Ovary (tissue), 10 donors: ENCODE measurements at regions of chr18 and their contacts with region 1.

Region 1: GRCh38 chr18:62522504-62523254 is at the start of gene ZCCHC2:
- DNase-seq: peak; percentile 98 to 99 (median 99)
- H3K4me3 ChIP-seq: peak within 1 kb of the TSS; percentile 90
- H3K27ac ChIP-seq: peak within 1 kb of the TSS; percentile 87 to 99
- H3K4me1 ChIP-seq: peaks cover 7% of the 10 kb centered on the region
- H3K27me3 ChIP-seq: no peaks in the 10 kb centered on the region
- CTCF ChIP-seq: no peak
- EP300 ChIP-seq: no peak
- POLR2A ChIP-seq: peak; percentile 90
- total RNA-seq, gene ZCCHC2: 14.8 to 24.5 (median 22.3) TPM

Region 2: GRCh38 chr18:62186774-62187542 is 335.7 kb before region 1 on chr18 and contains the starts of genes PIGN and RELCH:
- intact Hi-C with region 1: loop called in 1 of 4 experiments (anchors 5 kb)
- DNase-seq: peak; percentile 92 to 96 (median 94)
- H3K4me3 ChIP-seq: peak within 1 kb of the TSS; percentile 70
- H3K27ac ChIP-seq: peak within 1 kb of the TSS in 1 of 2 donors; percentile 50
- H3K4me1 ChIP-seq: peaks cover 7% of the 10 kb centered on the region
- H3K27me3 ChIP-seq: no peaks in the 10 kb centered on the region
- CTCF ChIP-seq: no peak
- EP300 ChIP-seq: no peak
- POLR2A ChIP-seq: peak; percentile 19
- total RNA-seq, gene PIGN: 17.7 to 29.1 (median 26.1) TPM
- total RNA-seq, gene RELCH: 21.5 to 32.7 (median 27.8) TPM

Region 3: DNA sequence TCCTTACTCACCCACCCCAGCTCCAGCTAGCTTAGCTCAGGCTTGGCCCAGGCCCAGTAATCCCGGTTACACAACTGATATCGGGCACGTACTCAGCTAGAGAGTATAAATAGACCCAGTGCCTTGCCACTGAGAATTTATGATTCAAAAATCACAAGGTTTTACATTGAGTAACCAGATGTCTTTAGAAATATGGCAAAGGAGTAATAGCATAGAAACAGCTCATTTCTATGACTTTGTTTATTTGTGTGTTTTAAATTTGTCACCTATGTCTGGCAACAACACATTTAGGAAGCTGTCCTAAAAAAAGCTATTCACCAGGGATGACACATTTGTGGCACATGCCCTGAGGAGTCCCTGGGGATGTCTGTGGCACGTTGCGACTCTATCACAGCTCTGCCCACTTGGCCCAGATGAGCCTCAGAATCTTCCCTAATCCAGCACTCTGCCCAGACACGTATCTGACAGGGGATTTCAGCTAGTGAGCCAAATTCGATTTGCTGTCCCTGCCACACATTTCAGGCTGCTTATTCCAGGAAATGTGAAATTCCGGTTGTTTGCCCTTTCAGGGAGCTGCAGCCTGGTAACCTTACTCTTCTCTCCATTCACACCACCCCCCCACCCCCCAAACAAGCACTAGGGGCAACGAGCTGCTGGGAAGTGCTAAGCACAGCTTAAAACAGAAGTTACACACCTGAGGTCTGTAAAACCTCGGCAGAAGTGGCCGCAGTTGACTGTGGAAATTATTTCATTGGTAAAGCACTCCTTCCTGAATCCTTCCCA is 85.3 kb before region 1 on chr18:
- intact Hi-C with region 1: loop called in 1 of 4 experiments (anchors 5 kb)
- DNase-seq: peak; percentile 42 to 86 (median 69)
- H3K4me3 ChIP-seq: no peak overlapping the region
- H3K27ac ChIP-seq: peak overlapping the region in 1 of 2 donors; percentile 20
- H3K4me1 ChIP-seq: peaks cover 4% of the 10 kb centered on the region
- H3K27me3 ChIP-seq: no peaks in the 10 kb centered on the region
- CTCF ChIP-seq: no peak
- EP300 ChIP-seq: no peak
- POLR2A ChIP-seq: no peak

Region 4: DNA sequence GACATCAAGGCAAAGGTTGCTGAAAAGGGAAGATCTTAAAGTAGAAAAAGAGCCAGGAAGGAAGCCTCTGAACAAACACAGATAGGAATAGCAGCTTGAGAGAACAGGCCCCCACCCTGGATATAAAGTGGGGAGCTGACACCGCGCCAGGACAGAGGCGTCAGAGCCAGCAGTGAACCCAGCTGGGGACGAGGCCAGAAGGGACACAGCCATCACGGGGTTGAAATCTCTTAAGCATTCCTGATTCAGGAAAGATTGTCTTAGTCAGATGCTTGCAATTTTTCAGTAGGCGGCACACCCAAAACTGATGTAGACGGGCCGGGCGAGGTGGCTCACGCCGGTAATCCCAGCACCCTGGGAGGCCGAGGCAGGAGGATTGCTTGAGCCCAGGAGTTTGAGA is 98.9 kb after region 1 on chr18:
- intact Hi-C with region 1: no loop called
- DNase-seq: no peak
- H3K4me3 ChIP-seq: no peak overlapping the region
- H3K27ac ChIP-seq: no peak overlapping the region
- H3K4me1 ChIP-seq: no peaks in the 10 kb centered on the region
- H3K27me3 ChIP-seq: no peaks in the 10 kb centered on the region
- CTCF ChIP-seq: no peak
- EP300 ChIP-seq: no peak
- POLR2A ChIP-seq: no peak

Region 5: GRCh38 chr18:62714671-62715435 is 192.2 kb after region 1 on chr18:
- intact Hi-C with region 1: loop called in 1 of 4 experiments (anchors 5 kb)
- DNase-seq: peak; percentile 100
- H3K4me3 ChIP-seq: peak overlapping the region; percentile 59
- H3K27ac ChIP-seq: peak overlapping the region; percentile 91 to 99
- H3K4me1 ChIP-seq: peaks cover 1% of the 10 kb centered on the region
- H3K27me3 ChIP-seq: no peaks in the 10 kb centered on the region
- CTCF ChIP-seq: peak; percentile 72 to 86 (median 81)
- EP300 ChIP-seq: no peak
- POLR2A ChIP-seq: no peak

Region 6: GRCh38 chr18:63367053-63367953 is 844.6 kb after region 1 on chr18 and contains the start of gene KDSR:
- intact Hi-C with region 1: loop called in 1 of 4 experiments (anchors 10 kb)
- DNase-seq: peak; percentile 95 to 98 (median 96)
- H3K4me3 ChIP-seq: peak within 1 kb of the TSS; percentile 100
- H3K27ac ChIP-seq: peak within 1 kb of the TSS; percentile 93 to 97
- H3K4me1 ChIP-seq: peaks cover 2% of the 10 kb centered on the region
- H3K27me3 ChIP-seq: no peaks in the 10 kb centered on the region
- CTCF ChIP-seq: no peak
- EP300 ChIP-seq: no peak
- POLR2A ChIP-seq: peak; percentile 88
- total RNA-seq, gene KDSR: 25.8 to 70.1 (median 62.6) TPM

Region 7: GRCh38 chr18:63422087-63422809 is 899.6 kb after region 1 on chr18 and contains the start of gene VPS4B:
- intact Hi-C with region 1: loop called in 1 of 4 experiments (anchors 10 kb)
- DNase-seq: peak; percentile 99 to 100 (median 99)
- H3K4me3 ChIP-seq: peak within 1 kb of the TSS; percentile 94
- H3K27ac ChIP-seq: peak within 1 kb of the TSS; percentile 82 to 96
- H3K4me1 ChIP-seq: no peaks in the 10 kb centered on the region
- H3K27me3 ChIP-seq: no peaks in the 10 kb centered on the region
- CTCF ChIP-seq: peak in 1 of 3 donors; percentile 35
- EP300 ChIP-seq: no peak
- POLR2A ChIP-seq: peak; percentile 74
- total RNA-seq, gene VPS4B: 20.7 to 43.4 (median 36.2) TPM